ENCODE measurements at regions of chr10 and their contacts with region 1.

Region 1: DNA sequence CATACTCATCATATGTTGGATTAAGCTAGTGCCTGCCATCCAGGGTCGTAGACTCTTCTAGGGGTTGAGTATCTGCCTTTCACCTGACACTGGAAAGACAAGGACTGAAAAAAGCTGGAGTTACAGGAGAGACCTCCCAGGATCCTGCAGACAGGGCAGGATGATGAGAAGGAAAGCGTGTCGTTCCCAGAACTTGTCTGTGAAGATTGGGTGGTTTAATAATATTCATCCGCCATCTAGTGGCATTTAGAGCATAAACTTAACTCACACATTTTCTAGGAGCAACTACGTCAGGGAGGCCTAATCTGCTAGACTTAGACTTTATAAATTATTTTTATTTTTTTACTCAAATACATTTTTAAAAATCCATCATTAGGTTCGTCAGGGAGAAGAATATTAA is 59.6 kb downstream of the ADRB1 start:
- DNase-seq: no peak
- H3K4me3 ChIP-seq: no peak overlapping the region
- H3K27ac ChIP-seq: no peak overlapping the region
- H3K4me1 ChIP-seq: peaks cover 4 to 22% (median 19%) of the 10 kb centered on the region in 4 donors
- H3K27me3 ChIP-seq: no peaks in the 10 kb centered on the region
- CTCF ChIP-seq: peak; percentile 56 to 69 (median 67)
- EP300 ChIP-seq: no peak
- POLR2A ChIP-seq: no peak

Region 2: GRCh38 chr10:113704637-113705343 is 398.5 kb before region 1 on chr10:
- intact Hi-C with region 1: loop called (anchors 2 kb)
- DNase-seq: no peak
- H3K4me3 ChIP-seq: no peak overlapping the region
- H3K27ac ChIP-seq: no peak overlapping the region
- H3K4me1 ChIP-seq: peaks cover 4 to 43% (median 33%) of the 10 kb centered on the region in 4 donors
- H3K27me3 ChIP-seq: no peaks in the 10 kb centered on the region
- CTCF ChIP-seq: peak; percentile 57 to 72 (median 64)
- EP300 ChIP-seq: no peak
- POLR2A ChIP-seq: no peak

Region 3: DNA sequence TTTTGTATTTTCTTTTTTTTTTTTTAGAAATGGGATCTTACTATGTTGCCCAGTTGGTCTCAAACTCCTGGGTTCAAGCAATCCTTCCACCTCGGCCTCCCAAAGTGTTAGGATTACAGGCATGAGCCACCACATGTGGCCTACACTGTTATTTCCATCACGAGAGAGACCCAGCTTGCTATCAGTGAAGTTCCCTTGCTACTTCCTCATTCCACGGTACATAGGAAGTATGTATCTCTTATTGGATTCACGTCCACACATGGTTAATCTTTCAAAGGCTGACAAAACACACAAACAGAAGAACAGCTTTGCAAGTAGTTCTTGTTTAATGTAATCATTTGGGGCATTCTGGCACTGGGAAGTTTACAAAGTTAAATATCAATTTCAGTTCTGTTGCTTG is 300.3 kb before region 1 on chr10:
- intact Hi-C with region 1: loop called (anchors 2 kb)
- DNase-seq: no peak
- H3K4me3 ChIP-seq: no peak overlapping the region
- H3K27ac ChIP-seq: peak overlapping the region in 3 of 4 donors; percentile 20 to 38 (median 25)
- H3K4me1 ChIP-seq: peaks cover 0 to 31% (median 25%) of the 10 kb centered on the region in 4 donors
- H3K27me3 ChIP-seq: no peaks in the 10 kb centered on the region
- CTCF ChIP-seq: no peak
- EP300 ChIP-seq: no peak
- POLR2A ChIP-seq: no peak

Region 4: GRCh38 chr10:113897693-113898618 is 205.3 kb before region 1 on chr10:
- intact Hi-C with region 1: loop called (anchors 10 kb)
- DNase-seq: no peak
- H3K4me3 ChIP-seq: no peak overlapping the region
- H3K27ac ChIP-seq: no peak overlapping the region
- H3K4me1 ChIP-seq: peaks cover 16 to 23% (median 22%) of the 10 kb centered on the region in 4 donors
- H3K27me3 ChIP-seq: no peaks in the 10 kb centered on the region
- CTCF ChIP-seq: no peak
- EP300 ChIP-seq: no peak
- POLR2A ChIP-seq: no peak

Region 5: GRCh38 chr10:113958631-113959382 is 144.5 kb before region 1 on chr10:
- intact Hi-C with region 1: no loop called
- DNase-seq: no peak
- H3K4me3 ChIP-seq: no peak overlapping the region
- H3K27ac ChIP-seq: peak overlapping the region; percentile 77 to 81 (median 80)
- H3K4me1 ChIP-seq: peaks cover 12 to 57% (median 54%) of the 10 kb centered on the region in 4 donors
- H3K27me3 ChIP-seq: no peaks in the 10 kb centered on the region
- CTCF ChIP-seq: no peak
- EP300 ChIP-seq: no peak
- POLR2A ChIP-seq: no peak

Measured in esophagus muscularis mucosa (tissue), 4 donors.